Left ventricle myocardium inferior (tissue), 1 donor: ENCODE measurements at regions of chr7 and their contacts with region 1.

Region 1: GRCh38 chr7:33932832-33933468 is 27.6 kb downstream of the BMPER start:
- DNase-seq: peak; percentile 71
- H3K4me3 ChIP-seq: peak overlapping the region; percentile 47
- H3K27ac ChIP-seq: no peak overlapping the region
- H3K4me1 ChIP-seq: no peaks in the 10 kb centered on the region
- H3K27me3 ChIP-seq: peaks cover 28% of the 10 kb centered on the region
- CTCF ChIP-seq: peak; percentile 99

Region 2: DNA sequence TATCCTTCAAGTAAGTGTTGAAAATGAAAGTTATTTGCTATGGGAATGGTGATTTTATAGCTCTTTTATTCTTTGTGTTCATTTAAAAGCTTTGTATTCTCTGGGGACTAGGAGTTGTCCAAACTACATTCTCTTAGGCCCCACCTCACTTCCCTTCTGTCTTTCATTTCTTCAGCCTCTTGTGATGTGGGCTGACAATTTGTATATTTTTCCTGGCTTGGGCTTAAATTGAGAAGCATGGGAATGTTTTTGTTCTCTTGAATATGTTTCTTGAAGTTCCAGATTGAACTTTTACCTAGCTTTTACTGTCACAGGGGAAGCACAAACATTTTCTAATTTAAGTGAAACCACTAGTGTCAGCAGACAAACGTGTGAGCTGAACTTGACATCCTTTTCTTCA is 775.6 kb before region 1 on chr7:
- intact Hi-C with region 1: no loop called
- DNase-seq: no peak
- H3K4me3 ChIP-seq: peak overlapping the region; percentile 1
- H3K27ac ChIP-seq: peak overlapping the region; percentile 65
- H3K4me1 ChIP-seq: peaks cover 16% of the 10 kb centered on the region
- H3K27me3 ChIP-seq: no peaks in the 10 kb centered on the region
- CTCF ChIP-seq: no peak

Region 3: GRCh38 chr7:33185786-33186185 is 747.2 kb before region 1 on chr7:
- intact Hi-C with region 1: loop called (anchors 10 kb)
- DNase-seq: no peak
- H3K4me3 ChIP-seq: no peak overlapping the region
- H3K27ac ChIP-seq: no peak overlapping the region
- H3K4me1 ChIP-seq: peaks cover 14% of the 10 kb centered on the region
- H3K27me3 ChIP-seq: no peaks in the 10 kb centered on the region
- CTCF ChIP-seq: peak; percentile 69

Region 4: GRCh38 chr7:33278095-33278494 is 654.9 kb before region 1 on chr7:
- intact Hi-C with region 1: no loop called
- DNase-seq: no peak
- H3K4me3 ChIP-seq: no peak overlapping the region
- H3K27ac ChIP-seq: no peak overlapping the region
- H3K4me1 ChIP-seq: no peaks in the 10 kb centered on the region
- H3K27me3 ChIP-seq: no peaks in the 10 kb centered on the region
- CTCF ChIP-seq: no peak

Region 5: GRCh38 chr7:33757562-33758165 is 175.3 kb before region 1 on chr7:
- intact Hi-C with region 1: loop called (anchors 10 kb)
- DNase-seq: no peak
- H3K4me3 ChIP-seq: no peak overlapping the region
- H3K27ac ChIP-seq: no peak overlapping the region
- H3K4me1 ChIP-seq: peaks cover 10% of the 10 kb centered on the region
- H3K27me3 ChIP-seq: no peaks in the 10 kb centered on the region
- CTCF ChIP-seq: peak; percentile 77

Region 6: GRCh38 chr7:33873981-33874753 is 58.8 kb before region 1 on chr7:
- intact Hi-C with region 1: no loop called
- DNase-seq: no peak
- H3K4me3 ChIP-seq: no peak overlapping the region
- H3K27ac ChIP-seq: peak overlapping the region; percentile 11
- H3K4me1 ChIP-seq: peaks cover 11% of the 10 kb centered on the region
- H3K27me3 ChIP-seq: peaks cover 8% of the 10 kb centered on the region
- CTCF ChIP-seq: no peak